Activated CD8-positive, alpha-beta T cell treated with anti-CD3 and anti-CD28 coated beads, Interleukin-2, amount 10 ng/mL, durations not matched to agents 7 days and 5 days (primary cell): ENCODE measurements at regions of chr16 and their contacts with region 1.

Region 1: GRCh38 chr16:84084570-84085270 is 32.0 kb downstream of the MBTPS1 start:
- DNase-seq: peak; percentile 84
- ATAC-seq: peak; percentile 84
- H3K4me3 Mint-ChIP-seq: no peak overlapping the region
- H3K27ac Mint-ChIP-seq: no peak overlapping the region
- H3K4me1 Mint-ChIP-seq: peaks cover 46% of the 10 kb centered on the region
- H3K27me3 Mint-ChIP-seq: no peaks in the 10 kb centered on the region

Region 2: GRCh38 chr16:84062734-84063640 is 21.7 kb before region 1 on chr16:
- CTCF ChIA-PET with region 1: interaction called, 12 read pairs
- POLR2A ChIA-PET with region 1: no interaction called
- DNase-seq: peak; percentile 73
- ATAC-seq: peak; percentile 88
- H3K4me3 Mint-ChIP-seq: no peak overlapping the region
- H3K27ac Mint-ChIP-seq: no peak overlapping the region
- H3K4me1 Mint-ChIP-seq: peaks cover 2% of the 10 kb centered on the region
- H3K27me3 Mint-ChIP-seq: no peaks in the 10 kb centered on the region

Region 3: DNA sequence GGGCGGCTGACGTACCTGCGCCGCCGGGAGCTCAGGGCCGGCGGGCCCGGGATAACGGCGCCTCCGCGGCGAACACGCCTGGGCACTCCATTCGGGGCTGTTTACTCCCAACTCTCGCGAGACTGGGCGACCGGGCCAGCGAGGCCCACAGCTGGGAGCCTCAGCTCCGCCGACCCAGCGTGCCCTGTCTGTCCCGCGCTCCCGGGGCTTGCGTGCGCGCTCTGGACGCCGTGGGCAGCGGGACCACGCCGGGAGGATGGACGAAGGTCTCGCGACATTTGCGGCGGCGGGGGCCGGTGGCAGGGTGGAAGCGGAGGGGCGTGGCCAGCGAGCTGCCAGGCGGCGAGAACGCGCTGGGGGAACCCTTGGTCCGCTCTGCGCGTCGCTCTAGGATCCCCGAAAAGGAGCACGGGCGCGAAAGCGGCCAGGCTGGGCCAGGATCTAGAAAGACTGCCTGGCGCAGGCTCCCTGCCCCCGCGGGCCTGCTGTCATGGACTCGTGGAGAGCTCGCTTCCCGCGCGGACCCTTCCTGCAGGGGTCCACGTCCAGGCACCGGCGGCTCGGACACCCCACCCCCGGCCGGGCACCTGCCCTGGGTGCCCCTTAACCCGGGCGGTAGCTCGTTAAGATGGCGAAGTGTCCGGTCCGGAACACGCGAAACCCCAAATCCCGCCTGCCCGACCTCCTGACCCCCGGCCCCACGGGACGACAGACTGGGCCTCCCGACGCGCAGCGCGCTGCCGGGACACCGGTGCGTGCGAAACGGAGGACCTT is 32.2 kb after region 1 on chr16 and contains the start of gene MBTPS1:
- CTCF ChIA-PET with region 1: interaction called, 77 read pairs
- POLR2A ChIA-PET with region 1: interaction called, 13 read pairs
- DNase-seq: peak; percentile 98
- ATAC-seq: peak; percentile 95
- H3K4me3 Mint-ChIP-seq: peak within 1 kb of the TSS; percentile 93
- H3K27ac Mint-ChIP-seq: peak within 1 kb of the TSS; percentile 95
- H3K4me1 Mint-ChIP-seq: peaks cover 22% of the 10 kb centered on the region
- H3K27me3 Mint-ChIP-seq: no peaks in the 10 kb centered on the region
- total RNA-seq, gene MBTPS1: 49.3 to 52.7 TPM

Region 4: DNA sequence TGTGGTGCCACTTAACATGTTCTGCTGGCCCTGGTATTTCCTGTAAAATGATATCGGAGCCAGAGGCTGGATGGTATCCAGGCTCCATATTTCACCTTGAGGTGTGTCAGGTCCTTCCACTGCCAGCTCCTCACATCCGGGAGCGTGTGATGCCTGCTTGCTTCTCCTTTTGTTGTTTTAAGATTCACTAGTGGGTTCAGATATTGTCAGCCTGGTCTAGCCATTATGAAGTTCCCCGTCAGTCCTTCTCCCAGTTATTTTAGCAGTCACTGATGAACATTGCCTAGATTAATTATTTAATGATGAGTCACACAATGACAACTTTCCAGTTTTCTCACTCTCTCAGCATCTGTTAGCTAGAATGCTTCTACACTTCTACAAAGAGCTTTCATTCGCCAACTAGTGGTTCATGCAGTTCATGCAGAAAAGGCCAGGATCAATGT is 71.6 kb after region 1 on chr16:
- CTCF ChIA-PET with region 1: interaction called, 10 read pairs
- POLR2A ChIA-PET with region 1: no interaction called
- DNase-seq: no peak
- ATAC-seq: no peak
- H3K4me3 Mint-ChIP-seq: no peak overlapping the region
- H3K27ac Mint-ChIP-seq: no peak overlapping the region
- H3K4me1 Mint-ChIP-seq: no peaks in the 10 kb centered on the region
- H3K27me3 Mint-ChIP-seq: peaks cover 37% of the 10 kb centered on the region

Region 5: GRCh38 chr16:84175350-84176081 is 90.8 kb after region 1 on chr16:
- CTCF ChIA-PET with region 1: interaction called, 95 read pairs
- POLR2A ChIA-PET with region 1: interaction called, 3 read pairs
- DNase-seq: peak; percentile 74
- ATAC-seq: peak; percentile 93
- H3K4me3 Mint-ChIP-seq: no peak overlapping the region
- H3K27ac Mint-ChIP-seq: no peak overlapping the region
- H3K4me1 Mint-ChIP-seq: peaks cover 4% of the 10 kb centered on the region
- H3K27me3 Mint-ChIP-seq: peaks cover 3% of the 10 kb centered on the region